ENCODE measurements at regions of chr9 and their contacts with region 1.

Region 1: DNA sequence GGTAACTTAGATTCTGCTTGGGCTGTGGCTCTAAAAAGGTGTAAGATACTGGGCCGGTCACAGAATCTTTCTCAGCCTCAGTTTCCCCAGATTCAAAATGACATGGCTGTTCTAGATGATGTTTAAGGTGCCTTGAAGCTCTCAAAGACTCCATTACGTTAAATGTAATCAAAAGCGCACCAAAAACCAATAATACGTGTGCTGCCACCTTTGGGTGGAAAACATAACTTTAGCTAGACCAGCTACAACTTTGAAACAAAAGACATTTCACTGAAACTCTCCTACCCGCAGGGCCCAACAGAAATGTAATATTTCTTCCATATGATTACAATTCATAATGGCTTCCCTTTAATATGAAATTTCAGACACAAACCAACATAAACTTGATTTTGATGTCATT is 35.0 kb upstream of the PCSK5 start:
- DNase-seq: peak; percentile 46
- H3K4me3 ChIP-seq: no peak overlapping the region
- H3K27ac ChIP-seq: no peak overlapping the region
- H3K4me1 ChIP-seq: no peaks in the 10 kb centered on the region
- H3K27me3 ChIP-seq: no peaks in the 10 kb centered on the region
- CTCF ChIP-seq: peak; percentile 20

Region 2: GRCh38 chr9:75601279-75601678 is 254.2 kb before region 1 on chr9:
- intact Hi-C with region 1: loop called (anchors 5 kb)
- DNase-seq: no peak
- H3K4me3 ChIP-seq: no peak overlapping the region
- H3K27ac ChIP-seq: no peak overlapping the region
- H3K4me1 ChIP-seq: no peaks in the 10 kb centered on the region
- H3K27me3 ChIP-seq: no peaks in the 10 kb centered on the region
- CTCF ChIP-seq: no peak

Region 3: GRCh38 chr9:75712700-75713099 is 142.8 kb before region 1 on chr9:
- intact Hi-C with region 1: no loop called
- DNase-seq: no peak
- H3K4me3 ChIP-seq: no peak overlapping the region
- H3K27ac ChIP-seq: no peak overlapping the region
- H3K4me1 ChIP-seq: no peaks in the 10 kb centered on the region
- H3K27me3 ChIP-seq: no peaks in the 10 kb centered on the region
- CTCF ChIP-seq: no peak

Region 4: DNA sequence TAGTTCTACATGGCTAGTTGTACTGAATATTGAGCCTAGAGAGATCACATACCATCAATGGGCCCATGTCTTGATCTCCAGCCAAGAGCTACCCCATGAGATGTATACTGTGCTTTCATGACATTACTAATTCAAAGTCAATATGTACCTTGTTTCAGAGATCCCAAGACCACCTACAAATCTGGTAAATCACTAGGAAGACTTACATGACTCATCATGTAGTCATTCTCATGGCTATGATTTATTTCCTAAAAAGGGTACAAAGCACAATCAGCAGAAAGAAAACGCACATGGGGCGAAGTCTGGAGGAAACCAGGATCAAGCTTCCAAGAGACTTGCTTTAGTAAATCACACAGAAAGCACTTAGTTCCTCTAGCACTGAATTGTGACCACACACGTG is 137.9 kb after region 1 on chr9:
- intact Hi-C with region 1: no loop called
- DNase-seq: no peak
- H3K4me3 ChIP-seq: no peak overlapping the region
- H3K27ac ChIP-seq: no peak overlapping the region
- H3K4me1 ChIP-seq: peaks cover 3% of the 10 kb centered on the region
- H3K27me3 ChIP-seq: no peaks in the 10 kb centered on the region
- CTCF ChIP-seq: no peak

Region 5: GRCh38 chr9:76530458-76531110 is 675.1 kb after region 1 on chr9:
- intact Hi-C with region 1: no loop called
- DNase-seq: no peak
- H3K4me3 ChIP-seq: no peak overlapping the region
- H3K27ac ChIP-seq: no peak overlapping the region
- H3K4me1 ChIP-seq: no peaks in the 10 kb centered on the region
- H3K27me3 ChIP-seq: no peaks in the 10 kb centered on the region
- CTCF ChIP-seq: no peak

Measured in colonic mucosa (tissue), 4 donors.